ENCODE measurements at regions of chr1 and their contacts with region 1.

Region 1: GRCh38 chr1:244970661-244971551 is 106.6 kb upstream of the HNRNPU start:
- DNase-seq: peak; percentile 94
- ATAC-seq: peak; percentile 87
- H3K4me3 Mint-ChIP-seq: peak overlapping the region; percentile 88
- H3K27ac Mint-ChIP-seq: peak overlapping the region; percentile 97
- H3K4me1 Mint-ChIP-seq: peaks cover 11% of the 10 kb centered on the region
- H3K27me3 Mint-ChIP-seq: no peaks in the 10 kb centered on the region
- CTCF ChIP-seq: peak; percentile 55

Region 2: DNA sequence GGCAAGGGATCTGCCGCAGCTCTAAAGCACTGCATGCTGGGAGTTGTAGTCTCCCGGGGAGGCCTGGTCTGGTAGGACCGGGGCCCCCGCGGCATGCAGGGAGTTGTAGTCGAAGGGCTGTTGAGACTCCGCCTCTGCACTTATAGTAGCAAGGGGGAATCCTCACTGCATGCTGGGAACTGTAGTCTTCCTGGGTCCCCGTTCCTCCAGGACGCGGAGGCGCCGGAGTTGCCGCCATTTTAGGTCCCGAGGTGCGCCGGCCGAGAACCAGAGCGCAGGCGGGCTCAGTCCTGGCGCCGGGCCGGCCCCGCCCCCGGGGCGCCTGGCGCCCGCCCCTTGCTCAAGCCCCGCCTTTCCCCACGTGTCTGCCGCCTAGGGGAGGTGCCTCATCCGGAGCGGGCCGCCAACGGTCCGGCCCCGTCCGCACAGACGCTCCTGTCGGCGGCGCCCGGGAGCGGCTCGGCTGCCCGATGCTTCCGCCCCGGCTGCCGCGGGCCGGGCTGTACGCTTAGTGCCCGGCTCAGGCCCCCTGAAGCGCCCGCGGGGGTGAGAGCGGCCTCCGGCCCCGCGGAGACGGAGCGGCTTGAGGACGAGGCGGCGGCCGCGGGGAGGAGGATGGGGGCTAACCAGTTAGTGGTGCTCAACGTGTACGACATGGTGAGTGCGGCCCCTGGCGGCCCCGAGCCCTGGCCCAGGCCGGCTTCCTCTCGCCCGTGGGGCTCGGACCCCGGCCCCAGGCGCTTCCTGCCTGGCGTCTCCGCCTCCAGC is 318.0 kb before region 1 on chr1 and contains the start of gene DESI2:
- CTCF ChIA-PET with region 1: no interaction called
- POLR2A ChIA-PET with region 1: interaction called, 3 read pairs
- intact Hi-C with region 1: loop called (anchors 5 kb)
- DNase-seq: peak; percentile 98
- ATAC-seq: peak; percentile 95
- H3K4me3 Mint-ChIP-seq: peak within 1 kb of the TSS; percentile 79
- H3K27ac Mint-ChIP-seq: peak within 1 kb of the TSS; percentile 86
- H3K4me1 Mint-ChIP-seq: peaks cover 23% of the 10 kb centered on the region
- H3K27me3 Mint-ChIP-seq: no peaks in the 10 kb centered on the region
- CTCF ChIP-seq: peak; percentile 56
- total RNA-seq, gene DESI2: 30.4 to 31.1 TPM

Region 3: GRCh38 chr1:244815600-244816099 is 155.3 kb before region 1 on chr1:
- CTCF ChIA-PET with region 1: no interaction called
- POLR2A ChIA-PET with region 1: no interaction called
- intact Hi-C with region 1: no loop called
- DNase-seq: no peak
- ATAC-seq: no peak
- H3K4me3 Mint-ChIP-seq: no peak overlapping the region
- H3K27ac Mint-ChIP-seq: no peak overlapping the region
- H3K4me1 Mint-ChIP-seq: peaks cover 9% of the 10 kb centered on the region
- H3K27me3 Mint-ChIP-seq: peaks cover 1% of the 10 kb centered on the region
- CTCF ChIP-seq: no peak

Region 4: DNA sequence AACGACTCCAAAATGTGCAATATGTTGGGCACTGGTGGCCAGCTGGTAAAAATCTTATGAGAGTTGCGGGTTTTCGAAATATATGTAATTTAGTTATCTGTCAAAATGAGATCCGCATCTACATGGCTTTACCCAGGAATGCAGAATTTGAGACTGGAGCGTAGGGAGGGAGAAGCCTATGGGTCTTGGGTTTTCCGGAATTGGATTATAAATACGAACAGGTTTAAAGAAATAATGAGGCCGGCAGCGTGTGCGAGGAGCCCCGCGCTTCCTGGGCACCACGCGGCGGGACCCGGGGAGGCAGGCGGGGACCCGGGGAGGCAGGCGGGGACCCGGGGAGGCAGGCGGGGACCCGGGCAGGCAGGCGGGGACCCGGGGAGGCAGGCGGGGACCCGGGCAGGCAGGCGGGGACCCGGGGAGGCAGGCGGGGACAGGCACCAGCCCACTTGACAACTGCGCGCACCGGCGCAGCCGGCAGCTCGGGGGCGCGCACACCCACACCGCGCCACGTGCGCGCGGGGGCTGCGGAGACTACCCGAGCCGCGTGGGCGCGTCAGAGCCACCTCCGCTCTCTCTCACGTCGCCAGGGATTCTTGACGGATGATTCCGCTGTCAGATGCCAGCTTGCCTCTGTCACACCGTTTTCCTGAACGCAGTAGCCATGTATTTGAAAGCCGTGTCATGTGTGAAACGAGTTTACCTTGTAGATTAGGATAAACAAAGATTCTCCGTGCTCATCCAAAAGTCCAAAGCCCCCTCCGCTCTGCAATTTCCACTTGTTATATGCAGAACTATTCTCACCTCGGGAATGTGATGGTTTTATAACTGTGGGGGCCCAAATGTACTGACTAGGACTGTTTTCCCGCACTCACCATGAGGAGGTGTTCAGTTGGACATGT is 52.2 kb before region 1 on chr1:
- CTCF ChIA-PET with region 1: interaction called, 3 read pairs
- POLR2A ChIA-PET with region 1: no interaction called
- intact Hi-C with region 1: loop called (anchors 5 kb)
- DNase-seq: peak; percentile 57
- ATAC-seq: peak; percentile 84
- H3K4me3 Mint-ChIP-seq: peak overlapping the region; percentile 78
- H3K27ac Mint-ChIP-seq: peak overlapping the region; percentile 84
- H3K4me1 Mint-ChIP-seq: peaks cover 14% of the 10 kb centered on the region
- H3K27me3 Mint-ChIP-seq: peaks cover 2% of the 10 kb centered on the region
- CTCF ChIP-seq: no peak

Measured in activated CD8-positive, alpha-beta T cell treated with anti-CD3 and anti-CD28 coated beads for 36 hours (primary cell).